Naive thymus-derived CD8-positive, alpha-beta T cell (primary cell): ENCODE measurements at regions of chr9 and their contacts with region 1.

Region 1: DNA sequence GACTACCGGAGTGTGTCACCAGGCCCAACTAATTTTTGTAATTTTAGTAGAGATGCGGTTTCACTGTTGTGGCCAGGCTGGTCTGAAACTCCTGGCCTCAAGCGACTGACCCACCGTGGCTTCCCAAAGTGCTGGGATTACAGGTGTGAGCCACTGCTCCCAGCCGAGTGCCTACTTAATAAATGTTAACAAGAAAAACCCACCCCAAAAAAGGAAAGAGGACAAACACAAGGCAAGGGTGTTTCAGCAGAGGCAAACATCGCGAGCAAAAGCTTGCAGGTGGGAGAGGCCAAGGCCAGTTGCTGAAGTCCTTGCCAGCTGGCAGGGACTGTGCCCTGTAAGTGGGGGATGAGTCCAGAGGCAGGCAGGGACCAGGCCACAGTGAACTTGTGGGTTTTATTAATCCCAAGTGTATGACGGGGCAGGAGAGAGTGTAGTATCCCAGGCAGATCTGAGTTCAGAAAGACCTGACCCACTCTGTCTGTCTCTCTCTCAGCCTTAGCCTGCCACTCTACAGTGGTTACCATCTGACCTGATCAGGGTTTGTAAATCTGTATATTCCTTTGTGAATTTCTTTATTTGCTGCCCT is 6.4 kb upstream of the FPGS start:
- DNase-seq: no peak
- ATAC-seq: peak; percentile 26 to 27
- H3K4me3 Mint-ChIP-seq: peak overlapping the region; percentile 58 to 91 (median 80)
- H3K27ac Mint-ChIP-seq: peak overlapping the region; percentile 77 to 97 (median 92)
- H3K4me1 Mint-ChIP-seq: peaks cover 14 to 39% (median 29%) of the 10 kb centered on the region in 4 donors
- H3K27me3 Mint-ChIP-seq: no peaks in the 10 kb centered on the region

Region 2: GRCh38 chr9:127754099-127755050 is 41.9 kb before region 1 on chr9:
- POLR2A ChIA-PET with region 1: no interaction called
- DNase-seq: no peak
- ATAC-seq: no peak
- H3K4me3 Mint-ChIP-seq: no peak overlapping the region
- H3K27ac Mint-ChIP-seq: peak overlapping the region in 1 of 10 donors; percentile 43
- H3K4me1 Mint-ChIP-seq: peaks cover 16 to 33% (median 22%) of the 10 kb centered on the region in 4 donors
- H3K27me3 Mint-ChIP-seq: no peaks in the 10 kb centered on the region

Region 3: GRCh38 chr9:127869310-127870152 is 73.2 kb after region 1 on chr9:
- POLR2A ChIA-PET with region 1: interaction called, 13 read pairs
- DNase-seq: peak; percentile 55 to 88 (median 72)
- ATAC-seq: peak; percentile 48 to 79
- H3K4me3 Mint-ChIP-seq: no peak overlapping the region
- H3K27ac Mint-ChIP-seq: peak overlapping the region in 4 of 10 donors; percentile 43 to 67 (median 54)
- H3K4me1 Mint-ChIP-seq: peaks cover 13 to 22% (median 16%) of the 10 kb centered on the region in 4 donors
- H3K27me3 Mint-ChIP-seq: no peaks in the 10 kb centered on the region